ENCODE measurements at regions of chr5 and their contacts with region 1.

Region 1: DNA sequence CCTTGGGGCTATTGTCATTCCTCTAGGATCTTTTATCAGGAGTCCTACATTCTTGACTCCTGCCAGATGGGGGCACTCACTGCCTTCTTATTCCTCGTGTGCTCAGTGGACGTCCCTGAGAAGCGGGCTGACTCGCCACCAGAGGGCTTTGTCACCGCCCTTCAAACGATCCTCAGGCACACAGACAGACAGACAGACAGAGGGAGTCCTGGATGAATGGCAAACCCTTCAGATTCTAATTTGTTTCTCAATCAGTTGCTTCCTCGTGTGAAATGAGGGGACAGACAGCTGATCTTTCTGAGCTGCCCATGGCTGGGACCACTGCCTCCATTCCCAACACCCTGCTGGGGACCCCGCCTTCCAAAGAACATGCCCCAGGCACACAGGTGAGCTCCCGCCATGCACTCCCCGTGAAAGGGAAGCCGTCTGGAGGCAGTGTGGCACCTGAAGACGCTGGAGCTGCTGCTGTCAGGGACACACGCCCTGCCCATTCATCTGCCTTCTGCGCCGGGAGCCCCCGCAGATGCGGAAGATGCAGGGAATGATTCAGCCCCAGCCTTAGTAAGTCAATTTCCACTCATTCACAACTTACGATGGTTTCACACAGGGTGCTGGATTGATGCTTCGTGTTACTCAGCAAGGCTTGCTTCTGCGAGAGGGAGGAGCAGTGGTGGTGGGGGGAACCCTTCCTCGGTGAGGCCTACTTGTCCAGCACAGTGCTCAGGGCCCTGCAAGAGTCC is 24.9 kb upstream of the SH3PXD2B start:
- DNase-seq: peak; percentile 36
- H3K4me3 ChIP-seq: no peak overlapping the region
- CTCF ChIP-seq: peak; percentile 89

Region 2: GRCh38 chr5:172347496-172348052 is 131.6 kb before region 1 on chr5:
- CTCF ChIA-PET with region 1: no interaction called
- POLR2A ChIA-PET with region 1: no interaction called
- DNase-seq: no peak
- H3K4me3 ChIP-seq: no peak overlapping the region
- CTCF ChIP-seq: no peak

Region 3: DNA sequence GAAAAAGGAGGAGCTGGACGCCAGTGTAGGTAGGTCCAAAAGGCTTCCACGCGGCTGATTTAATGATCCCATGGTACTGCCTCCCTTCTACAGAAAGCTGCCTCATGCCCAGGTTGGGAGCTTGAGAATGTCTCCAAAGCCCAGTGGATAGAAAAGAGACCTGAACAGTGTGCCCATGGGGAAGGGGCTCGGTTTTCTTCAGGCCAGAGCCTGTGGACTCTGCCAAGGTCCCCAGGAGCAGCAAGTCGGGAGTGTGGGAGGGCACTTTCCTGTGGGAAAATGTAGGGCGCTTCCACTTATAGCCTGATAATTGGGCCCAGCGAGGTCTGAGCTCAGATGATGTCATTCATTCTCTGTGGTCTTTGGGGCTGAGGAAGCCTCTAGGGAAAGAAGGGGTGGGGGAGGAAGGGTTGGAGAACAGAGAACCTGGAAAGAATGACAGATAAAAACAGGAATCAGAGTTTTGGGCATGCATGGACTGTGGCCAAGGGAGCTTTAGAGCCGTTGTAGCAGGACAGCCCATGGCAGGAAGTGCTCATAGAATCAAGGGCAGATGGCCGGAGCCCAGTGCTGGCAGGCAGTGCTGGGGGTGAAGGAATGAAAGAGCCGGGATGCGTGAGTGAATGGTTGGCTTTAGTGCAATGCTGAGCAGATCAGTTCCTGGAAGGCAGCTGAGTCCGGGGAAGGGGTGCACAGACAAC is 17.6 kb after region 1 on chr5:
- CTCF ChIA-PET with region 1: interaction called, 12 read pairs
- POLR2A ChIA-PET with region 1: no interaction called
- DNase-seq: no peak
- H3K4me3 ChIP-seq: no peak overlapping the region
- CTCF ChIP-seq: no peak

Region 4: GRCh38 chr5:172659909-172660628 is 180.9 kb after region 1 on chr5:
- CTCF ChIA-PET with region 1: no interaction called
- POLR2A ChIA-PET with region 1: no interaction called
- DNase-seq: peak; percentile 59
- H3K4me3 ChIP-seq: peak overlapping the region; percentile 25; the same call in 1 of the 2 replicates
- CTCF ChIP-seq: no peak

Region 5: GRCh38 chr5:172688349-172689217 is 209.4 kb after region 1 on chr5:
- CTCF ChIA-PET with region 1: interaction called, 412 read pairs
- POLR2A ChIA-PET with region 1: no interaction called
- DNase-seq: no peak
- H3K4me3 ChIP-seq: no peak overlapping the region
- CTCF ChIP-seq: no peak

Measured in AG04449 (cell line).